Activated CD8-positive, alpha-beta T cell treated with anti-CD3 and anti-CD28 coated beads, Interleukin-2, amount 10 ng/mL, durations not matched to agents 7 days and 5 days (primary cell): ENCODE measurements at regions of chr12 and their contacts with region 1.

Region 1: GRCh38 chr12:15575671-15576541 is 213.3 kb downstream of the EPS8 start:
- DNase-seq: no peak
- ATAC-seq: peak; percentile 54
- H3K4me3 Mint-ChIP-seq: no peak overlapping the region
- H3K27ac Mint-ChIP-seq: no peak overlapping the region
- H3K4me1 Mint-ChIP-seq: peaks cover 32% of the 10 kb centered on the region
- H3K27me3 Mint-ChIP-seq: no peaks in the 10 kb centered on the region

Region 2: GRCh38 chr12:15546102-15546701 is 29.7 kb before region 1 on chr12:
- CTCF ChIA-PET with region 1: interaction called, 20 read pairs
- POLR2A ChIA-PET with region 1: interaction called, 4 read pairs
- DNase-seq: peak; percentile 33
- ATAC-seq: peak; percentile 82
- H3K4me3 Mint-ChIP-seq: peak overlapping the region; percentile 39
- H3K27ac Mint-ChIP-seq: peak overlapping the region; percentile 83
- H3K4me1 Mint-ChIP-seq: peaks cover 35% of the 10 kb centered on the region
- H3K27me3 Mint-ChIP-seq: no peaks in the 10 kb centered on the region

Region 3: DNA sequence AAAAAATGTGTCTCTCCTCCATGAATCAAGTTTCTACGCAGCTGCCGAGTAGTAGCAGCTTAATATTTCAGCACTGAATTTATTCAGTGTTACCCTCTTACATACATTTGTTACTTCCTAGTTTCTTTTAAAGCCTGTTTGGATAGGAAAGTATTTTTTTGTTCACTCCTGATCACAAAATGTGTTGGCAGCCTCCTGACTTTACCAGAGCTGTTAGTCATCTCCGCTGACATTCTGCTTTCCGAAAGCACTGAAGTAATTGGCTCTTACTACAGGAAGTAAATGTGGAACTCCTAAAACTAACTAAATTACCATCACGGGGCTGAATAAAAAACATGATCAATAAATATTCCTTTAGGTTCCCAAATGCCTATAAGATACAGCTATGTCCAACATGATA is 12.2 kb before region 1 on chr12:
- CTCF ChIA-PET with region 1: interaction called, 13 read pairs
- POLR2A ChIA-PET with region 1: interaction called, 8 read pairs
- DNase-seq: peak; percentile 46
- ATAC-seq: peak; percentile 71
- H3K4me3 Mint-ChIP-seq: peak overlapping the region; percentile 51
- H3K27ac Mint-ChIP-seq: peak overlapping the region; percentile 91
- H3K4me1 Mint-ChIP-seq: peaks cover 57% of the 10 kb centered on the region
- H3K27me3 Mint-ChIP-seq: no peaks in the 10 kb centered on the region